ENCODE measurements at regions of chr1 and their contacts with region 1.

Region 1: GRCh38 chr1:27891196-27891889 is 19.0 kb downstream of the THEMIS2 start:
- DNase-seq: peak; percentile 22
- H3K4me3 Mint-ChIP-seq: no peak overlapping the region
- H3K27ac Mint-ChIP-seq: peak overlapping the region; percentile 63
- H3K4me1 Mint-ChIP-seq: peaks cover 49% of the 10 kb centered on the region
- H3K27me3 Mint-ChIP-seq: no peaks in the 10 kb centered on the region

Region 2: DNA sequence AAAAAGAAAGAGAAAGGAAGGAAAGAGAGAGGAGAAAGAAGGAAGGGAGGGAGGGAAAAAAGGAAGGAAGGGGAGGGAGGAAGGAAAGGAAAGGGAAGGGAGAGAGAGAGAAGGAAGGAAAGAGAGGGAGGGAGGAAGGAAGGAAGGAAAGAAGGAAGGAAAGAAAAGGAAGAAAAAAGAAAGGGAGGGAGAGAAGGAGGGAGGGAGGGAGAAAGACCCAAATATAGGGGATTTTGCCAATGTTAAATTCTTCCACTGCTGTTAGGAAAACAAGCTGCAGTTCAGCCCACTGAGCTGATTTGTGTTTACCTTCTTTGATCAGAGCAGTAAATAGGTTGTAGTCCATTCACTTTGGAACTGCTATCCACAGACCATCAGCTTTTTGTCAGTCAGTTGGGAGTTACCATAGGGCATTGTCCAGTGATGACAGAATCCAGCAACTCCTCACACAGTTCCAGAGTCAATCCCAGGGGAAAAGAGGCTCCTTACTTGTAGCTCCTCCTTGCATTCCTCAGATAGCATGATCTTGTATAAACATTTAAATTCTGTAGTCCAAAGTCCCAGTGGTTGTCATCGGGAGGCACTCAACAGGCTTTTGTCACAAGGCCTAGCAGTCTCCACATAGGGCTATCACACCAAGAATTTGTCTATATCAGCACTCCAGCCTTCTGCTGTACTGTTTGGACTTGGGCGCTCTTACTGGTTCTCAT is 74.3 kb before region 1 on chr1:
- CTCF ChIA-PET with region 1: no interaction called
- POLR2A ChIA-PET with region 1: no interaction called
- DNase-seq: no peak
- H3K4me3 Mint-ChIP-seq: no peak overlapping the region
- H3K27ac Mint-ChIP-seq: no peak overlapping the region
- H3K4me1 Mint-ChIP-seq: no peaks in the 10 kb centered on the region
- H3K27me3 Mint-ChIP-seq: no peaks in the 10 kb centered on the region

Region 3: DNA sequence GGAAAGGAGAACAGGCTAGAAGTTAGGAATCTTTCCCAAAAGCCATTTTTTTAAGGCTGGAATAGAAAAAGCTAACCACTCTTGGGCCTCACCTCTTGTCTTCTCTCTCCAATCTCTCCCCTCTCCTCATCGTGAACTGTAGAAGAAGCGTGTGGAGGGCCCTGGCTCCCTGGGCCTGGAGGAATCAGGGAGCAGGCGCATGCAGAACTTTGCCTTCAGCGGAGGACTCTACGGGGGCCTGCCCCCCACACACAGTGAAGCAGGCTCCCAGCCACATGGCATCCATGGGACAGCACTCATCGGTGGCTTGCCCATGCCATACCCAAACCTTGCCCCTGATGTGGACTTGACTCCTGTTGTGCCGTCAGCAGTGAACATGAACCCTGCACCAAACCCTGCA is 41.4 kb before region 1 on chr1:
- CTCF ChIA-PET with region 1: no interaction called
- POLR2A ChIA-PET with region 1: no interaction called
- DNase-seq: no peak
- H3K4me3 Mint-ChIP-seq: no peak overlapping the region
- H3K27ac Mint-ChIP-seq: no peak overlapping the region
- H3K4me1 Mint-ChIP-seq: no peaks in the 10 kb centered on the region
- H3K27me3 Mint-ChIP-seq: no peaks in the 10 kb centered on the region

Region 4: GRCh38 chr1:27915082-27915598 is 23.8 kb after region 1 on chr1:
- CTCF ChIA-PET with region 1: interaction called, 4 read pairs
- POLR2A ChIA-PET with region 1: interaction called, 12 read pairs
- DNase-seq: no peak
- H3K4me3 Mint-ChIP-seq: peak overlapping the region; percentile 99
- H3K27ac Mint-ChIP-seq: peak overlapping the region; percentile 99
- H3K4me1 Mint-ChIP-seq: peaks cover 24% of the 10 kb centered on the region
- H3K27me3 Mint-ChIP-seq: peaks cover 15% of the 10 kb centered on the region

Measured in activated CD4-positive, alpha-beta T cell treated with anti-CD3 and anti-CD28 coated beads, Interleukin-2, amount 10 ng/mL, durations not matched to agents 7 days and 5 days (primary cell).